CD4-positive, alpha-beta T cell (primary cell): ENCODE measurements at regions of chr1 and their contacts with region 1.

Region 1: DNA sequence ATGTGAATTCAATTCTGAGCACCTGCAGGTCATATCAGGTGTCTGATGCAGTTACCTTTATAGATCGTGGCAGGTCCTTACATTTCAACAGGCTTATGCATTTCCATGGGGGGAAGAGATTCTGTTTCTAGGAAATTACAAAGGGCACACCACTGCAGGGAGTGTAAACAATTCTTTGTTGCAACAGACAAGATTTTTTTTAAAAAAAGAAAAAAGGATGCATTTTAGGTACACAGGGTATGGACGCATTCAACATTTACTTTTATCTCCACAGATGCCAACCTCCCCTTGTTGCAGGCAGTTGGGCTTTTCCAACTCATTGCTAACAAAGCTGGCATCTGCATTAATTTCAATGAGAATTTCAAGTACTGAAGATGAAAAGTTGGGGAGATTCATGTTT is 13.5 kb upstream of the TEKT2 start:
- DNase-seq: no peak
- ATAC-seq: no peak
- H3K4me3 ChIP-seq: no peak overlapping the region
- H3K4me3 Mint-ChIP-seq: no peak overlapping the region
- H3K27ac ChIP-seq: no peak overlapping the region
- H3K27ac Mint-ChIP-seq: no peak overlapping the region
- H3K4me1 ChIP-seq: no peaks in the 10 kb centered on the region
- H3K4me1 Mint-ChIP-seq: no peaks in the 10 kb centered on the region
- H3K27me3 ChIP-seq: no peaks in the 10 kb centered on the region
- H3K27me3 Mint-ChIP-seq: no peaks in the 10 kb centered on the region
- CTCF ChIP-seq: no peak

Region 2: DNA sequence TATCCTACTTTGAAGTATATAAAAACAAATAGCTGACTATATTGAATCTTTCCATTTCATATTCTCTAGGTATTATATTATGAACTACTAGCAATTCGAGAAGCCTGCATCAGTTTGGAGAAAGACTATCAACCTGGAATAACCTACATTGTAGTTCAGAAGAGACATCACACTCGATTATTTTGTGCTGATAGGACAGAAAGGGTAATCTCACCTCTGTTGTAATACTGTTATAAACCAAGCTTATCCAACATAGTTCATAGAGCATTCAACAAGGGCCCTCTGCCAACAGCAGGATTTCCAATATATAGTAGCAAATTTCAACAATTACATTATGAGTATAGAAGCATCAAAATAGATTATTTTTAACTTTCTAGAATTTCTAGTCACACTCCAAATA is 30.1 kb before region 1 on chr1:
- CTCF ChIA-PET with region 1: no interaction called
- POLR2A ChIA-PET with region 1: no interaction called
- intact Hi-C with region 1: loop called in 1 of 2 experiments (anchors 2 kb)
- DNase-seq: no peak
- ATAC-seq: no peak
- H3K4me3 ChIP-seq: no peak overlapping the region
- H3K4me3 Mint-ChIP-seq: no peak overlapping the region
- H3K27ac ChIP-seq: no peak overlapping the region
- H3K27ac Mint-ChIP-seq: no peak overlapping the region
- H3K4me1 ChIP-seq: no peaks in the 10 kb centered on the region
- H3K4me1 Mint-ChIP-seq: no peaks in the 10 kb centered on the region
- H3K27me3 ChIP-seq: no peaks in the 10 kb centered on the region
- H3K27me3 Mint-ChIP-seq: no peaks in the 10 kb centered on the region
- CTCF ChIP-seq: no peak